ENCODE measurements at regions of chr19 and their contacts with region 1.

Region 1: GRCh38 chr19:41263850-41264580 is at the start of gene HNRNPUL1:
- DNase-seq: peak; percentile 99 to 100 (median 100)
- ATAC-seq: peak; percentile 50
- H3K4me3 ChIP-seq: peak within 1 kb of the TSS; percentile 85
- H3K4me3 Mint-ChIP-seq: peak within 1 kb of the TSS; percentile 96
- H3K27ac ChIP-seq: peak within 1 kb of the TSS; percentile 99 to 100
- H3K27ac Mint-ChIP-seq: peak within 1 kb of the TSS; percentile 100
- H3K4me1 ChIP-seq: peaks cover 59% of the 10 kb centered on the region
- H3K4me1 Mint-ChIP-seq: peaks cover 55% of the 10 kb centered on the region
- H3K27me3 ChIP-seq: no peaks in the 10 kb centered on the region
- H3K27me3 Mint-ChIP-seq: peaks cover 5% of the 10 kb centered on the region
- CTCF ChIP-seq: no peak
- total RNA-seq, gene HNRNPUL1: 367 to 388 TPM

Region 2: DNA sequence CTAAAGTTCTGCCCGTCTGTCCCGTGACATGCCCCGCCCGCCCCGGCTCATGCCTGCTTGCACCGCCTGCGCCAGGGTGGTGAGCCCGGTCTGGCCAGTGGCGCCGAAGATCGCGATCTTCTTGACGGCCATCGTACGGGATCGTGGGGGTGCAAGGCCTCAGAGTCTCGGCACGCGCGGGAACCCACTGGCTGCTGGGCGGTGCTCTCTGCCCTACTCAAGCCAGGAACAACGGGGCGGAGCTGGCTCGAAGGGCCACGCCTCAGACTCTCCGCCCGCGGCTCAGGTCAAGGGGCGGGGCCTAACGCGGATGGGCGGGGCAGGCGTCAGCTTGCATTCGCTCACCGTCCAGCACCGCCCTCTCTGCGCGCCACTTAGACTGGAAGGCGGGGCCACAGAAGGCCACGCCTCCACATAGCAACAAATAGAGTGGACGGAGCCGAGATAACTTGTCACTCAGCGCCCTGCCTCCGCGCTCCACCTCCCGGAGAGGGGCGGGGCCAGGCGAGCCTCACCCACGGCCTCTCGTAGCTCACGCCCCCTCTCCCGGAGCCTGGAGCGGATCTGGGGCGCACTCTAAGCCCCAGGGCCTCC is 798.4 kb before region 1 on chr19 and contains the start of gene BLVRB:
- CTCF ChIA-PET with region 1: no interaction called
- POLR2A ChIA-PET with region 1: no interaction called
- intact Hi-C with region 1: loop called in 1 of 2 experiments (anchors 2 kb)
- DNase-seq: peak; percentile 98 to 100 (median 100)
- ATAC-seq: peak; percentile 81
- H3K4me3 ChIP-seq: peak within 1 kb of the TSS; percentile 81
- H3K4me3 Mint-ChIP-seq: peak within 1 kb of the TSS; percentile 93
- H3K27ac ChIP-seq: peak within 1 kb of the TSS; percentile 13 to 62
- H3K27ac Mint-ChIP-seq: peak within 1 kb of the TSS; percentile 87
- H3K4me1 ChIP-seq: peaks cover 35% of the 10 kb centered on the region
- H3K4me1 Mint-ChIP-seq: peaks cover 30% of the 10 kb centered on the region
- H3K27me3 ChIP-seq: peaks cover 0 to 16% of the 10 kb centered on the region in 2 experiments
- H3K27me3 Mint-ChIP-seq: peaks cover 25% of the 10 kb centered on the region
- CTCF ChIP-seq: no peak
- total RNA-seq, gene BLVRB: 4.3 to 5.2 TPM

Region 3: DNA sequence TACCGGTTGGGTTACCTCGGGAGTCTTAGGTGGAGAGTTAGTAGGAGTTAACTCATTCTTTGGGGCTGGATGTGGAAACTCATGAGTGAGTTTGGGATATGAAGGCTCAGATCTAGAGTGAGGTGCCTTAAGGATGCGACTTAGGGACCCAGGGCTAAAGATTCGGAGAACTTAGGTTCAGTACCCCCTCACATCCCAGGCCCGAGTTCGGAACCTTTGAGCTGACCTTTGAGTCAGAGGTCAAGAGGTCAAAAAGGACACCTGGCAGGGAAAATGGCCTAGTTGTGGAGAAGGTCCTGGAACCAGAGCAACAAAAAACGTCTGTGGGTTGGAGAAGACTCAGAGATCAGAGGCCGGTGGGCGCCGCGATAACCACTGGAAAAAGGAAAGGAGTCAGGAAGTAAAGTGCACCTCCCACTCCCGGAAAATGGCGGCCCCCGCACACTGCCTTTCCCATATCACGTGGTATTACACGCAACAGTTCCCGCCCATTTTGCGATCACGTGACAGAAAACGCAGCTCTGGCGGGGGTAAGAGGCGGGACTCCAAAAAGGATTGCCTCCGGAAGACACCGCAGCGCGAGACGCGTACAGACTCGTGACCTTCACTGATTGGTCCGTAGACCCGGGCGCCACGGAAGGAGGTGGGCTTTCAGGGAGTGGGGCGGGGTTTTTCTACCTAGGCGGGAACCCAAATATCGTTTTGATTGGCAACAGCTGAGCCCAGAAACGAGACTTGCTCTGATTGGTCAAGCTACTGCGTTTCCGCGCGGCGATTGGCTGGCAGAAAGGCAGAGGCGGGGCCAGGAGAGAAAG is 513.7 kb before region 1 on chr19 and contains the start of gene ACTMAP:
- CTCF ChIA-PET with region 1: no interaction called
- POLR2A ChIA-PET with region 1: interaction called, 23 read pairs
- intact Hi-C with region 1: no loop called
- DNase-seq: peak; percentile 98 to 100 (median 99)
- ATAC-seq: peak; percentile 88
- H3K4me3 ChIP-seq: peak within 1 kb of the TSS; percentile 93
- H3K4me3 Mint-ChIP-seq: peak within 1 kb of the TSS; percentile 99
- H3K27ac ChIP-seq: peak within 1 kb of the TSS; percentile 84 to 93
- H3K27ac Mint-ChIP-seq: peak within 1 kb of the TSS; percentile 99
- H3K4me1 ChIP-seq: peaks cover 56% of the 10 kb centered on the region
- H3K4me1 Mint-ChIP-seq: peaks cover 47% of the 10 kb centered on the region
- H3K27me3 ChIP-seq: no peaks in the 10 kb centered on the region
- H3K27me3 Mint-ChIP-seq: no peaks in the 10 kb centered on the region
- CTCF ChIP-seq: no peak
- total RNA-seq, gene ACTMAP: 3.9 to 5.7 TPM

Region 4: GRCh38 chr19:40974633-40975037 is 289.4 kb before region 1 on chr19:
- CTCF ChIA-PET with region 1: no interaction called
- POLR2A ChIA-PET with region 1: interaction called, 11 read pairs
- intact Hi-C with region 1: loop called (anchors 1 to 2 kb)
- DNase-seq: peak; percentile 68 to 92 (median 76)
- ATAC-seq: peak; percentile 78
- H3K4me3 ChIP-seq: no peak overlapping the region
- H3K4me3 Mint-ChIP-seq: no peak overlapping the region
- H3K27ac ChIP-seq: no peak overlapping the region
- H3K27ac Mint-ChIP-seq: no peak overlapping the region
- H3K4me1 ChIP-seq: peaks cover 20% of the 10 kb centered on the region
- H3K4me1 Mint-ChIP-seq: peaks cover 32% of the 10 kb centered on the region
- H3K27me3 ChIP-seq: peaks cover 0 to 2% of the 10 kb centered on the region in 2 experiments
- H3K27me3 Mint-ChIP-seq: peaks cover 21% of the 10 kb centered on the region
- CTCF ChIP-seq: peak; percentile 99

Region 5: DNA sequence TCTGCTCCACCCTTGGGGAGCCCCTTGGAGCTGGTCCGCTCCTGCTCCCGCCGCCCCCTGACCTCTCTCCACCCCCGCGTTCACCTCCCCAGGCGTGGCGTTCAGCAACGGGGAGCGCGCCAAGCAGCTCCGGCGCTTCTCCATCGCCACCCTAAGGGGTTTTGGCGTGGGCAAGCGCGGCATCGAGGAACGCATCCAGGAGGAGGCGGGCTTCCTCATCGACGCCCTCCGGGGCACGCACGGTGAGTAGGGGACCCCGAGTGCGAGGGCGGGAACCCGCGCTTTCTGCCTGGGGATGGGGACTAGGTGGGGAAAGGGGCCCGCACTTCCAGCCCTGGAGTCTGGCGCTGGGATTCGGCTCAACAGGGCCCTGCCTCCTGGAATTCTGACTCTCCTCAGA is 174.1 kb before region 1 on chr19:
- CTCF ChIA-PET with region 1: no interaction called
- POLR2A ChIA-PET with region 1: no interaction called
- intact Hi-C with region 1: no loop called
- DNase-seq: peak in 1 of 14 experiments; percentile 13
- ATAC-seq: no peak
- H3K4me3 ChIP-seq: no peak overlapping the region
- H3K4me3 Mint-ChIP-seq: peak overlapping the region; percentile 49
- H3K27ac ChIP-seq: no peak overlapping the region
- H3K27ac Mint-ChIP-seq: no peak overlapping the region
- H3K4me1 ChIP-seq: peaks cover 3% of the 10 kb centered on the region
- H3K4me1 Mint-ChIP-seq: no peaks in the 10 kb centered on the region
- H3K27me3 ChIP-seq: peaks cover 24 to 28% of the 10 kb centered on the region in 2 experiments
- H3K27me3 Mint-ChIP-seq: peaks cover 94% of the 10 kb centered on the region
- CTCF ChIP-seq: no peak

Region 6: GRCh38 chr19:41136636-41137455 is 127.2 kb before region 1 on chr19:
- CTCF ChIA-PET with region 1: no interaction called
- POLR2A ChIA-PET with region 1: no interaction called
- intact Hi-C with region 1: no loop called
- DNase-seq: no peak
- ATAC-seq: no peak
- H3K4me3 ChIP-seq: no peak overlapping the region
- H3K4me3 Mint-ChIP-seq: peak overlapping the region; percentile 81
- H3K27ac ChIP-seq: no peak overlapping the region
- H3K27ac Mint-ChIP-seq: peak overlapping the region; percentile 27
- H3K4me1 ChIP-seq: peaks cover 21% of the 10 kb centered on the region
- H3K4me1 Mint-ChIP-seq: peaks cover 14% of the 10 kb centered on the region
- H3K27me3 ChIP-seq: peaks cover 0 to 2% of the 10 kb centered on the region in 2 experiments
- H3K27me3 Mint-ChIP-seq: no peaks in the 10 kb centered on the region
- CTCF ChIP-seq: no peak

Region 7: DNA sequence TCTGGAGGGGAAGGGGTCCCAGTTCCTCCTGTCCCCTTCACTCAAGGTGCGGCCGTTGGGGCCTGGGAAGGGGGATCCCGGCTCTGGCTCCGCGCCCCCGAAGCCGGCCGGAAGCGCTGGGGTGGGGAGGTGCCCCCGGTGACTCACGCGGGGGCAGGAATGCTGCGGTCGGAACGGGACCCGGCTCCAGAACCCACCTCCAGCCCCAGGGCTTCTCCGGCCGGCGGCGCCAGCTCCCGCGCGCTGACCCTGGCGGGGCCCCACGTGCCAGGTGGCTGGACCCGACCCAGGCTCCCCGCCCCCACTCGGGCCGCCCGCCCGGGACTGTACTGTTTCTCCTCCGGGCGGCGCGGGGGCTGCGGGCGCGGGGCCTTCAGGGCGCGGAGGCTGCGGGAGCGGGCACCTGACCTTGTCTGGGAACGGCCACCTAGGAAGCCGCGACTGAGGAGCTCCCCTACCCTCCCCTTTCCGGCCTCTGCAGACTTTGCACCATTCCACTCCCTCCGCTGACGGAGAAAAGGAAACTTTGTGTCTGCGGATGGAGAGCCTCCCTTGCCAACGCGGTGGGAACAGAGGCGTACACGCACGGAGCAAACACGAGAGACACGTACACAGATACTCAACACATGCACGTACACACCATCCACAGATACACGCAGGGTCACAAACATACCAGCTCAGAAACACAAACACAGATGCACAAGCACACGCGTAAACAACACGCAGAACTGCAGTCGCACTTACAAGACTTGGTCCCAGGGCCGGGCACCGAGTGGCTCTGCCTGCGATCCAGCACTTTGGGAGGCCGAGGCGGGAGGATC is 37.8 kb before region 1 on chr19:
- CTCF ChIA-PET with region 1: interaction called, 4 read pairs
- POLR2A ChIA-PET with region 1: interaction called, 28 read pairs
- intact Hi-C with region 1: loop called (anchors 1 to 5 kb)
- DNase-seq: peak in 13 of 14 experiments; percentile 8 to 71 (median 38)
- ATAC-seq: peak; percentile 74
- H3K4me3 ChIP-seq: peak overlapping the region; percentile 60
- H3K4me3 Mint-ChIP-seq: peak overlapping the region; percentile 86
- H3K27ac ChIP-seq: no peak overlapping the region
- H3K27ac Mint-ChIP-seq: peak overlapping the region; percentile 85
- H3K4me1 ChIP-seq: peaks cover 16% of the 10 kb centered on the region
- H3K4me1 Mint-ChIP-seq: peaks cover 18% of the 10 kb centered on the region
- H3K27me3 ChIP-seq: peaks cover 0 to 2% of the 10 kb centered on the region in 2 experiments
- H3K27me3 Mint-ChIP-seq: peaks cover 8% of the 10 kb centered on the region
- CTCF ChIP-seq: peak; percentile 7

Region 8: GRCh38 chr19:41353466-41354342 is 89.7 kb after region 1 on chr19 and contains the start of gene TGFB1:
- CTCF ChIA-PET with region 1: interaction called, 29 read pairs
- POLR2A ChIA-PET with region 1: interaction called, 83 read pairs
- intact Hi-C with region 1: loop called (anchors 1 kb)
- DNase-seq: peak; percentile 89 to 98 (median 94)
- ATAC-seq: peak; percentile 60
- H3K4me3 ChIP-seq: peak within 1 kb of the TSS; percentile 99
- H3K4me3 Mint-ChIP-seq: peak within 1 kb of the TSS; percentile 94
- H3K27ac ChIP-seq: peak within 1 kb of the TSS; percentile 82 to 94
- H3K27ac Mint-ChIP-seq: peak within 1 kb of the TSS; percentile 93
- H3K4me1 ChIP-seq: peaks cover 72% of the 10 kb centered on the region
- H3K4me1 Mint-ChIP-seq: peaks cover 81% of the 10 kb centered on the region
- H3K27me3 ChIP-seq: no peaks in the 10 kb centered on the region
- H3K27me3 Mint-ChIP-seq: no peaks in the 10 kb centered on the region
- CTCF ChIP-seq: peak; percentile 80
- total RNA-seq, gene TGFB1: 406 to 416 TPM

Region 9: DNA sequence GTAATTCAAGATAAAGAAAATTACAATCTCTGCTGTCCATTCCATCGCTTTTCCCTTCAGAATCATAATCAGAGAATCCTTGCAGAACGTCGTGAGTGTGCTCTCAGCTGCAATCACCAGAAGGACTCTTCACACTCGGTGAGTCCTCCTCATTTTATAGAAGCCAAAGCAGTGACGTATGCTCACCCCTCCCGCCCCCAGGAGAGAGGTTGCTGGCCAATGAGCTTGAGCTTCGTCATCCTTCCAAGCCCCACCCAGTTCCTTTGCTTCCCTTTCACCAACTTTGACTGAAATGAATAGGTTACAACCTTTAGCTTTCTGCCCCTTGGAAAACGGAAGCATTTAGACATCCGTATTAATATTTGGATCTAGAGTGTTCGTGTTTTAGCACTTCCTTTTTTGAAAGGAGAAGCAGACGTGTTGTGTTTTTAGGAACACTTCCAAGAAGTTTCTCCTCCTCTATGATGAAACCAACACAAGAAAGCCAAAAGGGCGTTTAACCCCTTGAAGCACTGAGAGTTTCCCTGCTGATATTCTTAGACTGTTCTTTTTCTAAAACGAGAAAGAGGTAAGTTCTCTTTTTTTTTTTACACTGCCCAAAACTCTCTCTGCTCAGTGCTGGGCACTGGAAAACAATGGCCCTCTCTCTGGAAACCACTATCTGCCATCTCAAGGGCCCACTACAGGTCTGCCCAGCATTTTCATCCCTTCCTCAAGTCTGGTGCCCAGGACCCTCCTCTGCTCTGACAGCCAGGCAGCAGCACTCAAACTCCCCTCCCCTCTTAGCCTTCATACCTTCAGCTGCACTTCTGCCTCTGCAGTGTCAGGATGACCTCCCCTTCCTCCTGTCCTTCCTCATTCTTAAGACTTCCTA is 267.7 kb after region 1 on chr19:
- CTCF ChIA-PET with region 1: no interaction called
- POLR2A ChIA-PET with region 1: interaction called, 13 read pairs
- intact Hi-C with region 1: no loop called
- DNase-seq: peak; percentile 65 to 96 (median 80)
- ATAC-seq: peak; percentile 91
- H3K4me3 ChIP-seq: peak overlapping the region; percentile 42
- H3K4me3 Mint-ChIP-seq: peak overlapping the region; percentile 67
- H3K27ac ChIP-seq: peak overlapping the region; percentile 37 to 63
- H3K27ac Mint-ChIP-seq: peak overlapping the region; percentile 78
- H3K4me1 ChIP-seq: peaks cover 41% of the 10 kb centered on the region
- H3K4me1 Mint-ChIP-seq: peaks cover 51% of the 10 kb centered on the region
- H3K27me3 ChIP-seq: no peaks in the 10 kb centered on the region
- H3K27me3 Mint-ChIP-seq: no peaks in the 10 kb centered on the region
- CTCF ChIP-seq: no peak